Naive thymus-derived CD4-positive, alpha-beta T cell (primary cell): ENCODE measurements at regions of chr13 and their contacts with region 1.

Region 1: GRCh38 chr13:77207943-77208342 is 119.0 kb downstream of the MYCBP2 start:
- DNase-seq: peak in 2 of 9 donors; percentile 9 to 10
- ATAC-seq: no peak
- H3K4me3 ChIP-seq: no peak overlapping the region
- H3K4me3 Mint-ChIP-seq: peak overlapping the region in 2 of 10 donors; percentile 27 to 35
- H3K27ac ChIP-seq: peak overlapping the region; percentile 20
- H3K27ac Mint-ChIP-seq: peak overlapping the region; percentile 3 to 77 (median 41)
- H3K4me1 ChIP-seq: no peaks in the 10 kb centered on the region
- H3K4me1 Mint-ChIP-seq: peaks cover 5 to 33% (median 23%) of the 10 kb centered on the region in 7 donors
- H3K27me3 ChIP-seq: no peaks in the 10 kb centered on the region
- H3K27me3 Mint-ChIP-seq: no peaks in the 10 kb centered on the region

Region 2: DNA sequence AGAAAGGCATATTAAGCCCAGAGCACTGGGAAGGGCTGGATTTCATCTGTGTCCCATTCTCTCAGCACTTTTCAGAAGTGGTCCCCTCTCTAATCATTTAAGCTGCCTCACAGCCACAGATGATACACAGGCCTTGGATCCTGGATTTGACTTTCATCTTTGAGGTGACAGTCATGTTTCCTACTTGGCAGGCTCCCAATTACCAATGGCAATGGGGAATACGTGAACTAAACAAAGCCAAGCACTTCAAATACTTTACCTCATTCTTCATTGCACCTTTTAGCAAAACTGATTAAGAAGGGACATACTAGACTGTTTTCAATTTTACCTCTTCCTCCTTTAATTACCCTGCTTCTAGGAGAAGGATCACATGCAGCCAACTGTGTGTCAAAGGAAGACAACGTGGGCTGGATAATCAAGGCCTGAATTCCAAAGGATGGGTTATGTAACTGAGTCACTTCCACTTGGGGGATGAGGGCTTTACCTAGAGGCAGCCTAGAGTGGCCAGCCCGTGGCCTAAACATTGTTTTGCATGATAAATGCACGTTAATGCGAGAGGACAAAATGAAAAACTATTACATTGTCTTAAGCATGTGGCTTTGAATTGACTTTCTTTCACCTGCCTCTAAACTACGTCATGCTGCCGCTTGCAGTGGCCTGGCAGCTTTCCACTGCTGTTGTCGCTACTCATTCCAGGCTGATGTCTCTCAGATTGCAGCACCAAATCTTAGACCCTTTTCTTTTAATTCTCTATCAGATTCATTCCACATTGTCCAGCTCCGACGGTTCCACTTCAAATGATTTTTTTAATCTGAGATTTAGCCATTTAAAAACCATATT is 416.7 kb before region 1 on chr13:
- CTCF ChIA-PET with region 1: no interaction called
- POLR2A ChIA-PET with region 1: no interaction called
- intact Hi-C with region 1: no loop called
- DNase-seq: no peak
- ATAC-seq: no peak
- H3K4me3 ChIP-seq: no peak overlapping the region
- H3K4me3 Mint-ChIP-seq: no peak overlapping the region
- H3K27ac ChIP-seq: no peak overlapping the region
- H3K27ac Mint-ChIP-seq: no peak overlapping the region
- H3K4me1 ChIP-seq: no peaks in the 10 kb centered on the region
- H3K4me1 Mint-ChIP-seq: peaks cover 0 to 2% (median 0%) of the 10 kb centered on the region in 7 donors
- H3K27me3 ChIP-seq: peaks cover 0 to 2% of the 10 kb centered on the region in 2 donors
- H3K27me3 Mint-ChIP-seq: peaks cover 0 to 10% (median 5%) of the 10 kb centered on the region in 5 donors

Region 3: DNA sequence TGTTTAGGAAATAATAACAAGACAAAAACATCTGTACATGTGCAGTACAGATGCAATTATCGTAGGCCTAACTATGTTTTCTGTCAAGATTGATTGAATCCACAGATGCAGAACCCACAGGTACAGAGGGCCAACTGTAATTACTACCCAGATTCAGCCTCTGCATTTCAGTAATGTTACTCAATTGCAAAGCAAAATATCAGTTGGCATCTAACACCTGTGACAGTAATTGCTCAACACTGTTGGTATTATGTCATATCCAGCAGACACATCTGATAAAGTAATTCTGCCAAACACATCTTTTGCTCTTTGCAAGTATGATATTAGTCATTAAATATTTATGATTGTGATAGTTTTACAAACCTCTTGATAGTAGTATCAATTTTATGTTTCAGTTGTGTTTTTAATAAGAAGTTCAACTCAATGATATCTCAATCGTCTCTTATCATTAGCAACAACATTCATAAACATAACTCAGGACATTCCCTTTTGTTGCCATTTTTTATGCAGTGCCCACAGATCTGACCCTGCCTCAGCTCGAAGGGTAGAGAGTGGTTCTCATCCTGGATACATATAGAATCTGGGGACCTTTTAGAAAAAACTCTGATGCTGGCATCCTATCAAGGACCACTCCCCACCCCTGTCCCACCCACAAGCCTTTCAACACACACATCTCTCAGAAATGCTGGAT is 14.2 kb after region 1 on chr13:
- CTCF ChIA-PET with region 1: interaction called, 3 read pairs
- POLR2A ChIA-PET with region 1: no interaction called
- intact Hi-C with region 1: loop called in 1 of 2 experiments (anchors 2 kb)
- DNase-seq: no peak
- ATAC-seq: no peak
- H3K4me3 ChIP-seq: no peak overlapping the region
- H3K4me3 Mint-ChIP-seq: no peak overlapping the region
- H3K27ac ChIP-seq: no peak overlapping the region
- H3K27ac Mint-ChIP-seq: peak overlapping the region in 3 of 9 donors; percentile 17 to 37 (median 23)
- H3K4me1 ChIP-seq: no peaks in the 10 kb centered on the region
- H3K4me1 Mint-ChIP-seq: peaks cover 7 to 33% (median 19%) of the 10 kb centered on the region in 7 donors
- H3K27me3 ChIP-seq: no peaks in the 10 kb centered on the region
- H3K27me3 Mint-ChIP-seq: no peaks in the 10 kb centered on the region